ENCODE measurements at regions of chr11 and their contacts with region 1.

Region 1: DNA sequence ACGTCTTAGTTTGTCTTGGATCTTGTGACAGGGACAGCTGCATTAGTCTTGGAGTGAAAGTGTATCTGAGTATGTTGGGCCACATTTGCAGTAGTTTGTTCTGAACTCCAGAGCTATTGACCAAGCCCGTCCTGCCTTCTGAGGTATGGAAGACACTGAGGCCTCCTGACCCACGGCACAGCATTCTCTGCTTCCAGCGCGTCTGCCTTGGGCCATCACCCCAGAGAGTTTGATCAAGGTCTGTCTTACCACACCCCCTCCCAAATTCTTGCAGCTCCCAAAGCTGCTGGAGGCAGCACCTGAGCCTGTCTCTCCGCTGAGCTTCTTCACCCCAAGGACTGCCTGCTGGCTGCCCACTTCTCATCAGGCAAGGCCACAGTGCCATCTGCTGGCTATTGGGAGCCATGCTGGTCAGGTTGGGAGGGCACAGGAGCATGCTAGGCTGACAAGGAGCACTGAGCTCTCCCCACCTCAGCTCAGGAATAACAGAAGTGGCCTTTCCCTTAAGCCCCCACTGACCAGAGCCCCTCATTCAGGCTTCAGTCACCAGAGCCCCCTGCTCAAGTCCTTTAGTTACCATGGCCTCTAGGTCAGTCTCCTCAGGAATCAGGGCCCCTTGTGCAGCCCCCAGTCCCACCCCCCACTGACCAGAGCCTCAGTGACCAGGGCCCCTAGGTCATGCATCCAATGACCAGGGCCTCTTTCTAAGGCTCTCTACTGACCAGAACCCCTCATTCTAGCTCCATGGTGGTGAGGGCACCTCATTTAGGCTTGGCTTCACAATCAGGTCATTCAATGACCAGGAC is 27.2 kb upstream of the SMPD1 start:
- DNase-seq: peak; percentile 78 to 84
- ATAC-seq: peak; percentile 89 to 98 (median 94)
- H3K4me3 ChIP-seq: peak overlapping the region in 4 of 10 donors; percentile 9 to 16 (median 10)
- H3K27ac ChIP-seq: peak overlapping the region; percentile 65 to 87 (median 82)
- H3K4me1 ChIP-seq: peaks cover 0 to 13% (median 0%) of the 10 kb centered on the region in 9 donors
- H3K27me3 ChIP-seq: no peaks in the 10 kb centered on the region
- CTCF ChIP-seq: peak; percentile 80 to 97 (median 90)

Region 2: DNA sequence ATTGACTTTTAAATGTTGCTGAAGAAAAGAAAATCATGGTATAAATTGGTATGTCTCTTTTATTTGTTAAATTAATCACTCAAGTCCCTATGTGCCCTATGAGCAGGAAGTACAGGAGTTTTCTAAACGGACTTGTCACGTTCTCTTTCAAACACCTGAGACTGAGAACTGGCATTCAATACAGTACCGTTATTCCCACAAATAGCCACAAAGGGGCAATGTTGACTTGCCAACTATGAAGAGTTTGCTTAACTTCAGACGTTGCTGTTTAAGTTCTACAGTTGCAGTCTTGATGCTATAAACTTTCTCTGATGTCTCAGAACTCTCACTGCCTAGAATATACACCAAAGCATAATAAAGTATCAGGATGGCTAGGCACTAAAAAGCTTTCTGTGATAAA is 340.1 kb before region 1 on chr11:
- intact Hi-C with region 1: loop called in 3 of 10 experiments (anchors 2 to 5 kb)
- DNase-seq: peak in 1 of 2 donors; percentile 51
- ATAC-seq: peak in 7 of 8 donors; percentile 65 to 83 (median 73)
- H3K4me3 ChIP-seq: no peak overlapping the region
- H3K27ac ChIP-seq: no peak overlapping the region
- H3K4me1 ChIP-seq: no peaks in the 10 kb centered on the region
- H3K27me3 ChIP-seq: no peaks in the 10 kb centered on the region
- CTCF ChIP-seq: peak; percentile 18 to 82 (median 66)

Region 3: GRCh38 chr11:6234387-6235107 is 128.5 kb before region 1 on chr11 and contains the start of gene FHIP1B:
- intact Hi-C with region 1: loop called in 1 of 10 experiments (anchors 5 kb)
- DNase-seq: peak; percentile 99 to 100
- ATAC-seq: peak; percentile 97 to 99 (median 98)
- H3K4me3 ChIP-seq: peak within 1 kb of the TSS; percentile 52 to 84 (median 74)
- H3K27ac ChIP-seq: peak within 1 kb of the TSS in 9 of 10 donors; percentile 83 to 92 (median 86)
- H3K4me1 ChIP-seq: peaks cover 3 to 41% (median 21%) of the 10 kb centered on the region in 9 donors
- H3K27me3 ChIP-seq: no peaks in the 10 kb centered on the region
- CTCF ChIP-seq: peak in 2 of 9 donors; percentile 3 to 17
- total RNA-seq, gene FHIP1B: 13.4 to 17.3 (median 14.3) TPM

Region 4: GRCh38 chr11:6251120-6251733 is 111.8 kb before region 1 on chr11:
- intact Hi-C with region 1: loop called in 3 of 10 experiments (anchors 2 to 10 kb)
- DNase-seq: peak; percentile 58 to 66
- ATAC-seq: peak; percentile 82 to 95 (median 86)
- H3K4me3 ChIP-seq: no peak overlapping the region
- H3K27ac ChIP-seq: peak overlapping the region in 4 of 10 donors; percentile 20 to 43 (median 32)
- H3K4me1 ChIP-seq: peaks cover 0 to 27% (median 6%) of the 10 kb centered on the region in 9 donors
- H3K27me3 ChIP-seq: peaks cover 0 to 7% (median 0%) of the 10 kb centered on the region in 7 donors
- CTCF ChIP-seq: peak; percentile 46 to 86 (median 77)

Region 5: GRCh38 chr11:6298605-6299004 is 64.5 kb before region 1 on chr11:
- intact Hi-C with region 1: loop called in 3 of 10 experiments (anchors 5 to 10 kb)
- DNase-seq: peak; percentile 33 to 54
- ATAC-seq: peak in 6 of 8 donors; percentile 43 to 88 (median 74)
- H3K4me3 ChIP-seq: no peak overlapping the region
- H3K27ac ChIP-seq: no peak overlapping the region
- H3K4me1 ChIP-seq: no peaks in the 10 kb centered on the region
- H3K27me3 ChIP-seq: no peaks in the 10 kb centered on the region
- CTCF ChIP-seq: peak; percentile 19 to 75 (median 64)

Region 6: GRCh38 chr11:6303661-6304060 is 59.4 kb before region 1 on chr11:
- intact Hi-C with region 1: loop called in 3 of 10 experiments (anchors 5 to 10 kb)
- DNase-seq: no peak
- ATAC-seq: no peak
- H3K4me3 ChIP-seq: no peak overlapping the region
- H3K27ac ChIP-seq: no peak overlapping the region
- H3K4me1 ChIP-seq: no peaks in the 10 kb centered on the region
- H3K27me3 ChIP-seq: peaks cover 0 to 4% (median 0%) of the 10 kb centered on the region in 7 donors
- CTCF ChIP-seq: no peak

Region 7: GRCh38 chr11:6315811-6316425 is 47.2 kb before region 1 on chr11:
- intact Hi-C with region 1: loop called in 1 of 10 experiments (anchors 2 kb)
- DNase-seq: peak; percentile 49 to 51
- ATAC-seq: peak in 3 of 8 donors; percentile 11 to 32 (median 17)
- H3K4me3 ChIP-seq: peak overlapping the region in 5 of 10 donors; percentile 15 to 33 (median 22)
- H3K27ac ChIP-seq: peak overlapping the region in 5 of 10 donors; percentile 1 to 100 (median 33)
- H3K4me1 ChIP-seq: peaks cover 6 to 52% (median 33%) of the 10 kb centered on the region in 9 donors
- H3K27me3 ChIP-seq: peaks cover 0 to 21% (median 0%) of the 10 kb centered on the region in 7 donors
- CTCF ChIP-seq: peak; percentile 77 to 94 (median 88)

Region 8: GRCh38 chr11:6455070-6455469 is 92.0 kb after region 1 on chr11:
- intact Hi-C with region 1: no loop called
- DNase-seq: no peak
- ATAC-seq: no peak
- H3K4me3 ChIP-seq: no peak overlapping the region
- H3K27ac ChIP-seq: no peak overlapping the region
- H3K4me1 ChIP-seq: no peaks in the 10 kb centered on the region
- H3K27me3 ChIP-seq: no peaks in the 10 kb centered on the region
- CTCF ChIP-seq: no peak

Region 9: GRCh38 chr11:6473481-6474422 is 110.7 kb after region 1 on chr11 and contains the start of gene TRIM3:
- intact Hi-C with region 1: no loop called
- DNase-seq: peak; percentile 95 to 97
- ATAC-seq: peak; percentile 84 to 95 (median 90)
- H3K4me3 ChIP-seq: peak within 1 kb of the TSS; percentile 54 to 97 (median 90)
- H3K27ac ChIP-seq: peak within 1 kb of the TSS; percentile 74 to 98 (median 94)
- H3K4me1 ChIP-seq: peaks cover 0 to 39% (median 27%) of the 10 kb centered on the region in 9 donors
- H3K27me3 ChIP-seq: no peaks in the 10 kb centered on the region
- CTCF ChIP-seq: peak in 4 of 9 donors; percentile 22 to 44 (median 32)
- total RNA-seq, gene TRIM3: 6.3 to 12.7 (median 8.7) TPM

Measured in heart right ventricle (tissue), 16 donors.